Tibial artery (tissue), 4 donors: ENCODE measurements at regions of chr6 and their contacts with region 1.

Region 1: GRCh38 chr6:163404825-163405265 is 9.7 kb upstream of the QKI start:
- DNase-seq: peak; percentile 60 to 73
- H3K4me3 ChIP-seq: no peak overlapping the region
- H3K27ac ChIP-seq: peak overlapping the region; percentile 79 to 86
- H3K4me1 ChIP-seq: peaks cover 0 to 26% (median 17%) of the 10 kb centered on the region in 4 donors
- H3K27me3 ChIP-seq: no peaks in the 10 kb centered on the region
- CTCF ChIP-seq: no peak

Region 2: DNA sequence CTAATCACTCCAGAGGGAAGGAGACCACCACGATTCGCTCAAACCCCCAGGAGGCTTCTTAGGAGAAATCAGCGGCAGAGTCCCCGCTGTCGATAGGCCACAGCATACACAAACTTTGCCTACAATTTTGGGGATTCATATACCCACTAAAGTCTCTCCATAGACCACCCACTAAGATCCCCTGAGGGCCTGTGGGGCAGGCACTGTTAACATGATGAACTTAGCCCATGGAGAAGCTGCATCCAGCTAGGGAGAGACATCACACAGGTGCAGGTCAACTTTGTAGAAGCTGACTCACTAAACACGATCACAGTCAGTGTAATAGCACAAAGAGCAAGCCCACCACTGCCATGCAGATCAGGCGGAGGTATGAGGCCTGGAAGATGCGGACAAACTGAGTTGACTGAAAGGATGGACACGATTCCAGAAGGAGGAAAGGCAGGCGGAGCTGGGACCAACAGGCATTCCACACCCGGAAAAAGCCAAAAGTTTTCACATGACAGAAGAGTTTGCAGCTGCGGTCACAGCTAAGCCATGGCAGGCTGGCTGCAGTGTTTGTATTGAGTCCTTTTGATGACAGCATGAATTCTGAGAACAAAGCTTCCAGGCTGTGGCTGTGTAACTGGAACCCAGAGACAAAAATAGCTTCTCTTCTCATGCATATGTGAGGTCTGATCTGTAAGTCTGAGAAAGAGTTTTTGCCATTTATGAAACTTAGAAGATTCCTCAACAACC is 66.0 kb before region 1 on chr6:
- intact Hi-C with region 1: loop called (anchors 5 kb)
- DNase-seq: peak in 1 of 2 donors; percentile 51
- H3K4me3 ChIP-seq: no peak overlapping the region
- H3K27ac ChIP-seq: no peak overlapping the region
- H3K4me1 ChIP-seq: peaks cover 0 to 36% (median 14%) of the 10 kb centered on the region in 4 donors
- H3K27me3 ChIP-seq: no peaks in the 10 kb centered on the region
- CTCF ChIP-seq: no peak